Activated naive CD8-positive, alpha-beta T cell treated with anti-CD3 and anti-CD28 coated beads, Interleukin-2, amount 10 ng/mL, durations not matched to agents 7 days and 5 days (primary cell): ENCODE measurements at regions of chr3 and their contacts with region 1.

Region 1: DNA sequence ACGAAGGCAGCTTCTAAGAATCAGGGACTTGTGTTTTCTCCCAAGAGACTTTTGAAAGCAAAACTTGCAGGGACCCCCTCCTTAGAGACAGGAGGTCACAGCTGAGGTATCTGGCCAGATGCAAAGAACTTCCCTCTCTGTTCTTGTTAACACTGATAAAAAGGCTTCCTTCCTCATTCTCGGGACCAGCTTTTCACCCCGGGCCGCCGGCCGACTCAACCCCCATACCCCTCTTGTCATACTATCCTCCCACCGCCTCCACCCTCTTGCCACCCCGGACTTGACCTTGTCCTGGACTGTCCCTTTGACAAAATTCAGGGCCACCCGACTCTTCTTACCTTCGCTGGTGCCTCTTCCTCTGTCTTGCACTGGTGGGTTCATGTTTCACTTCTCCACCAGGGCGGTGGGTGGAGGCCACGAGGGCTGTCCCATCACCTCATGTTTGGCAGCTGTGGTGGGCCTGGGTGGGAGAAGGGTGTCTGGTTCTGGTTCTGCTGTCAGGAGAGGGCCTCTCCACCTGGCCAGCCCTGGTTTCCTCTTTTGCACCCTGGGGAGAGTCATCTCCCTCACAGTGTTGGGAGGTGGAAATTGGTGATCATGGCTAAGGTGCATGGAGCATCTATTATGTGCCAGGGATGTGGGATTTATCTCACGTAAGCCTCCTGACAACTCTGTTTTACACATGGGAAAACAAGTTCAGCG is 32.5 kb downstream of the BHLHE40 start:
- DNase-seq: peak; percentile 70
- ATAC-seq: peak; percentile 67
- H3K4me3 Mint-ChIP-seq: peak overlapping the region; percentile 75
- H3K27ac Mint-ChIP-seq: peak overlapping the region; percentile 95
- H3K4me1 Mint-ChIP-seq: peaks cover 75% of the 10 kb centered on the region
- H3K27me3 Mint-ChIP-seq: no peaks in the 10 kb centered on the region

Region 2: DNA sequence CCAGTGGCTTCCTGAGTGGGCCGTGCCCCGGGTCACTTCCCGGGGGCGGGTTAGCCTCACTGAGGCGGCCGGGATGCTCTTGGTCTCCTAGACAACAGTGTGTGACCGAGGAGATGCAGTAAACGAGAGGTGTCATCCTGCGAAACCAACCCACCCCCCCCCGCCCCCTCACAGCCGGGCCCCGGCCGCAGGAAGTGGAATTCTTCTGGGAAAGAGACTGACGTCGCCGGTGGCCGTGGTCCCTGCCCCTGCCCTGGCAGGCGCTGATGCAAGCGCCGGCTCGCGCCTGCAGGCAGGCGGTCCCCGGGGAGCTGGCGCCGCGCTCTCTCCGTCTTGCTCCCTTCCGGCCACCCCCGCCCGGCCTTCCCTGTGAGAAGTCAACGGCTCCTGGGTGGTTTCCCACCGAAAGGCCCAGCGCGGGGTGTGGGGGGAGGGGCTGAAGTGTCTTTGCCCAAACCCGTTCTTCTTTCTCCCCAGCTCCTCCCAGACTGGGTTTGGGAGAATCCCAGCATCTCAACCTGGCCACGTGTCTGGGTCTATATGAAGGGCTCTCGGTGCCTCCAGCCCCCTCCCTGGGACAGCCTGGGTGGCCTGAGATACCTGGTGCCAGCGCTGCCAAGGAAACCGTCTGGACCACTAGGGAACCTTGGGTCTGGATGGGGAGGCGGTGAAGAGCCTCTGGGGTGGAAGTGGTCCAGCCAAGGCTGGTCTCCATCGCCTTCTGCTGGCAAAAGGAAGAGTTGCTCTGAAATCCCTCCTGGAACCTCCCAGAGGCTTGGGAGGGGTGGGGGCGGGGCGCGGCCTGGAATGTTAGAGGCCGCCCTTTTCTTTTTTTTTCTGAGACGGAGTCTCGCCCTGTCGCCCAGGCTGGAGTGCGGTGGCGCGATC is 14.9 kb after region 1 on chr3:
- POLR2A ChIA-PET with region 1: interaction called, 12 read pairs
- DNase-seq: peak; percentile 75
- ATAC-seq: peak; percentile 76
- H3K4me3 Mint-ChIP-seq: peak overlapping the region; percentile 83
- H3K27ac Mint-ChIP-seq: peak overlapping the region; percentile 88
- H3K4me1 Mint-ChIP-seq: peaks cover 33% of the 10 kb centered on the region
- H3K27me3 Mint-ChIP-seq: no peaks in the 10 kb centered on the region